Gastrocnemius medialis (tissue), 4 donors: ENCODE measurements at regions of chr14 and their contacts with region 1.

Region 1: DNA sequence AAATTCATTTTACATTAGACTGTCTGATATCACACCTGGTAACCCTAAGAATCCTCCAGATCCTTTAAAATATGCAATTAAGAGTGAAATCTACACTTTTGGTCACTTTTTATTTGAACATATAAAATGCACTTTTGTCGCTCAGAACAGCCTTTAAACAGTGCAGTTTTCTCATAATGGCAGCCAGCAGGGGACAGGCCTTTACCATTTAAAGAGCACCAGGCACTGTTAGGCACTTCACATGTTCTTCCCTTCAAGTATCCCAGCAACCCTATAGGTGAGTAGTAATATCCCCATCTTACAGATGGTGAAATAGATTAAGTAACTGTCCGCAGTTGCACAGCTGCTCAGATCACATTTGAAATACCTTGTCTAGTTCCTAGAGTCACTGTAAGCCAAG is 11.3 kb upstream of the SAMD4A start:
- DNase-seq: no peak
- ATAC-seq: no peak
- H3K4me3 ChIP-seq: no peak overlapping the region
- H3K27ac ChIP-seq: no peak overlapping the region
- H3K4me1 ChIP-seq: no peaks in the 10 kb centered on the region
- H3K27me3 ChIP-seq: no peaks in the 10 kb centered on the region
- CTCF ChIP-seq: no peak
- POLR2A ChIP-seq: no peak

Region 2: DNA sequence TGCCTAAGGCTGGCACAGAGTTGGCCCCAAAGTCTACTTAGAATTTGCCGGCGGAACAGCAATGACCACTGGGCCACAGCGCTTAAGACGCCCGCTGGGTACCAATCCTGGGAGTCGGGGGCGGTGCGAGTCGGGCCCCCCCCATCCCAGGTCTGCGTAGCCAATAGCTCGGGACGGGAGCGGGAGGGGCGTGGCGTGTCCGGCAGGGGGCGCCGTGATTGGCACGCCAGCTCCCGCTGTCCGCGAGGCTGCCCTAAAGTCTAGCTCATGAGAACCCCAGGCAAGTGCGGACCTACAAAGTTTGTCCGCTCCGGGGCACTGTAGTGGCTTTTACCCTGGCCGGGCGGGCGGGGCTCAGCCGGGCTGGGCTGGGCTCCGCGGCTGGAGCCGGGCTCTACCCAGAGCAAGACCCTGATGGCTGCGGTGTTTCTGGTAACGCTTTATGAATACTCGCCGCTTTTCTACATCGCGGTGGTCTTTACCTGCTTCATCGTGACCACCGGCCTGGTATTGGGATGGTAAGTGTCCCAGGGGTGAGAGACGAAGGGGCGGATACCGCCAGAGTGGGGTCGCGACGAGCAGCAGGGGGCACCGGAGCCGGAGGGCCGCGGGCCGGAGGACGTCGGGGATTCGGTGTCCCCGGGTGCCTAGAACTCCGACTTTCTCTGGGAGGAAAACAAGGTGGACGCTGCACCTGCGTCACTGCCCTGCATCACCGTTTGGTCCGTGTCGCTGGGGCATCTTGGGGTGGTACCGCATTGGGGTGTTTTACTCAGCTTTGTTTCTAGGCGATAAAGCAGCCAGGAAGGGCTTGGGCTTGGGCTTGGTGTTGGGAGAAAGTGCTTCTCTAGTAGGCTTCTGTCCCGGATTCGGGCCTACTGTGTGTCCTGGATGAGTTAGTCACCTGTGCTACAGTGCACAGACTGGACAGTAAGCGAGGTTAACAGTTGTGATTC is 45.8 kb before region 1 on chr14 and contains the start of gene CGRRF1:
- in situ Hi-C with region 1: no loop called
- intact Hi-C with region 1: loop called (anchors 5 kb)
- DNase-seq: peak; percentile 97 to 98
- ATAC-seq: peak; percentile 97 to 100
- H3K4me3 ChIP-seq: peak within 1 kb of the TSS; percentile 96 to 100 (median 99)
- H3K27ac ChIP-seq: peak within 1 kb of the TSS; percentile 91 to 93 (median 92)
- H3K4me1 ChIP-seq: peaks cover 30 to 33% of the 10 kb centered on the region in 2 donors
- H3K27me3 ChIP-seq: no peaks in the 10 kb centered on the region
- CTCF ChIP-seq: peak; percentile 24 to 90 (median 88)
- POLR2A ChIP-seq: peak; percentile 66 to 74
- total RNA-seq, gene CGRRF1: 13.7 to 27.0 (median 20.7) TPM

Region 3: GRCh38 chr14:54805521-54806322 is 250.1 kb after region 1 on chr14:
- in situ Hi-C with region 1: loop called in 2 of 4 experiments (anchors 10 kb)
- intact Hi-C with region 1: no loop called
- DNase-seq: peak; percentile 59 to 79
- ATAC-seq: peak; percentile 92
- H3K4me3 ChIP-seq: peak overlapping the region in 1 of 4 donors; percentile 17
- H3K27ac ChIP-seq: no peak overlapping the region
- H3K4me1 ChIP-seq: peaks cover 0 to 5% of the 10 kb centered on the region in 2 donors
- H3K27me3 ChIP-seq: no peaks in the 10 kb centered on the region
- CTCF ChIP-seq: peak; percentile 89 to 97 (median 92)
- POLR2A ChIP-seq: no peak

Region 4: DNA sequence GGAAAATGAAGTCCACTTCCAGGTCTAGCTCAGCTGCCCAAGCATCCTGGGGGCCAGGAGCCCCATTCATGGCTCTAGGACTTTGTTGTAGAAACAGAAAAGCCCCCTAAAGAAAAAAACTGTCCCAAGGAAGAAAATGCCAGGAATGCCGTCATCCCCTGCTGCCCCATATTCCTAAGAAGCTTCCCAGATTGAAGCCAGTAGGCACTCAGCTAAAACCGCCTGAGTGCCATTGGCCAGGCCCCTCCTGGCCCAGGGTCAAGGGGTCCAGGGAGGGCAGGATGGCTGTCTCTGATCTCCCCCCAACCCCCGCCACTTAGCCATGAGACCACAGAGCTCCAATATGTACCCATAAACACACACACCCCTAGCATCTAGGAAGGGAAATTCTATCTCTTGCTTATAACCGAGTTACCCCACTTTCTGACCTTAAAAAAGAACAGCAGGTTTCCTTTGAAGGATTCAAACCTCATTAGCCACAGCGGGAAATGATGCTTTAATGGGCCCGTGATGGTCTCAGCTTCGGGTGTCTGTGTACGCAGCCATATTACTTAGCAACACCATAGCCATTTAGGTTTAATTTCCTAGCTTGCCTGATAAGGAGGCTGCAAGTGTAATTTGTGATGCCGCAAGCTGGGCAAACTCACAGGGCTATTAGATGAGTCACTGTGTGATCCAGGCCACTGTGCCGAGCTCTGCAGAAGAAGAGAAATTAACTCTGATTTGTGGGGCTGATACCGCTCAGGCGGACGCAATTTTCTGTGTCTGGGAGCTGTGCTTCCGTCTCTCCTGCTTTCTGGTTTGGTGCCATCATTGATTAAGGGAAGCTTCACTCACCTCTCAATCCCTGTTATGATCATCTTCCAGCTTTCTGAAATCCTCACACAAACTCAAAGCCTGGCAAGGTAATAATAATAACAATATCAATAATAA is 262.8 kb after region 1 on chr14:
- in situ Hi-C with region 1: loop called in 1 of 4 experiments (anchors 10 kb)
- intact Hi-C with region 1: no loop called
- DNase-seq: no peak
- ATAC-seq: peak in 1 of 2 donors; percentile 31
- H3K4me3 ChIP-seq: no peak overlapping the region
- H3K27ac ChIP-seq: no peak overlapping the region
- H3K4me1 ChIP-seq: no peaks in the 10 kb centered on the region
- H3K27me3 ChIP-seq: no peaks in the 10 kb centered on the region
- CTCF ChIP-seq: no peak
- POLR2A ChIP-seq: no peak